ENCODE measurements at regions of chr12 and their contacts with region 1.

Region 1: DNA sequence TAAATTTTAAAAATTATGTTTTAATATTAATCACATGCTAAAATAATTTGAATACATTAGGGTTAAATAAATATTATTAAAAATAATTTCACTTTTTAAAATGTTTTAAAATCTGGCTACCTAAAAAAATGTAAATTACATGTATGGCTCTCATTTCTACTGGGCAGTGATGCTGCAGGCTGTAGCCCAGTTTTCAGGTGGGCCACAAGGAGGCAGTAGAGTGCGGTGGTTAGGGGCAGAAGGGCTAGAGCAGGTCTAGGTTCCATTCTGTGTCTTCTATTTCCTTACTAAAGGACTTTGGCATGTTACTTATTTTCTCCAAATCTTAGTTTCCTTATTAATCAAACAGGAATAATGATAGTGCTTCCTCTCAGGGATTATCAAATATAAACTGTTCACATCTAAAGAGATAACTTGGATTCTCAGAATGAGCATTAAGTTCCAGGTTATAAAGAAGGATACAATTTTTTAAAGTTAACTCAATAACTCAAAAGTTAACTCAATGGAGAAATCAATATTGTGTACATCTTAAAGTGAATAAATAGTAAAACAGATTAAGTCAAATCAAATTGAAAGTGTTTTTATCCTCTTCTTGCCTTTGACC is 54.9 kb upstream of the OVCH1 start:
- DNase-seq: peak; percentile 66
- H3K4me3 ChIP-seq: no peak overlapping the region
- H3K27ac ChIP-seq: no peak overlapping the region
- H3K4me1 ChIP-seq: peaks cover 4% of the 10 kb centered on the region
- H3K27me3 ChIP-seq: no peaks in the 10 kb centered on the region
- CTCF ChIP-seq: peak; percentile 82 to 85
- POLR2A ChIP-seq: no peak

Region 2: GRCh38 chr12:29414368-29414767 is 138.1 kb before region 1 on chr12:
- CTCF ChIA-PET with region 1: no interaction called
- POLR2A ChIA-PET with region 1: no interaction called
- dilution Hi-C with region 1: no loop called
- intact Hi-C with region 1: no loop called
- DNase-seq: no peak
- H3K4me3 ChIP-seq: no peak overlapping the region
- H3K27ac ChIP-seq: no peak overlapping the region
- H3K4me1 ChIP-seq: no peaks in the 10 kb centered on the region
- H3K27me3 ChIP-seq: peaks cover 0 to 2% of the 10 kb centered on the region in 2 experiments
- CTCF ChIP-seq: no peak
- POLR2A ChIP-seq: no peak

Region 3: GRCh38 chr12:29519585-29520182 is 32.7 kb before region 1 on chr12:
- CTCF ChIA-PET with region 1: interaction called, 20 read pairs
- POLR2A ChIA-PET with region 1: no interaction called
- dilution Hi-C with region 1: no loop called
- intact Hi-C with region 1: no loop called
- DNase-seq: peak; percentile 75
- H3K4me3 ChIP-seq: no peak overlapping the region
- H3K27ac ChIP-seq: no peak overlapping the region
- H3K4me1 ChIP-seq: no peaks in the 10 kb centered on the region
- H3K27me3 ChIP-seq: no peaks in the 10 kb centered on the region
- CTCF ChIP-seq: peak; percentile 21 to 33
- POLR2A ChIP-seq: no peak

Region 4: DNA sequence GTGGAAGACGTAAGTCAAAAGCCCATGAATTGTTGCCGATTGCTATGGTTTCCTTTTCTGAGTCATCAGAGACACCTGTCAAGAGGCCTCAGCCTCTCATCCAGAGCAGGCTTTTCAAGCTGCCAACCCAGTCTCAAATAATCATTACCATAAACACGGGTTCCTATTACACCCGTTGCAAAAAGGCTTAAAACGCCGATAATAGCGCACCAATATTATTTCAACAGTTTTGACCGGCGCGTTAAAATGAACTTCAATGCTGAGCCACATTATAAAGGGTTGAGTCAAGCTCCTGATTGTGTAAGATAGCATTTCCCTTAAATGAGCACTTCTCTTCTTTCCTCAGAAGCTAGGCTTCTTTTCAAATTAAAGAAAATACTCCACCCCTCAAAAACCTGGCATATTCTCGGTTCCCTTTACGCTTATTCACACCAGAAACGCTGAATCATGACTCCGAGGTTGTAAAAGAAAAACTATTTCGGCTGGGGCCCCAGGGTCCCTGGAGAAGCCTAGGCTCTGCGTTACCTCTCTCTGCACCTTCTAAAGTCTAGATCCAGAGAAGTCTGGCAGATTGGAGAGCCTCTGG is 230.0 kb after region 1 on chr12:
- CTCF ChIA-PET with region 1: interaction called, 6 read pairs
- POLR2A ChIA-PET with region 1: no interaction called
- dilution Hi-C with region 1: no loop called
- intact Hi-C with region 1: loop called (anchors 1 kb)
- DNase-seq: peak; percentile 63
- H3K4me3 ChIP-seq: peak overlapping the region; percentile 32 to 71 (median 60)
- H3K27ac ChIP-seq: no peak overlapping the region
- H3K4me1 ChIP-seq: peaks cover 16% of the 10 kb centered on the region
- H3K27me3 ChIP-seq: peaks cover 4 to 15% of the 10 kb centered on the region in 2 experiments
- CTCF ChIP-seq: no peak
- POLR2A ChIP-seq: no peak

Region 5: GRCh38 chr12:29889737-29890136 is 337.3 kb after region 1 on chr12:
- CTCF ChIA-PET with region 1: interaction called, 5 read pairs
- POLR2A ChIA-PET with region 1: no interaction called
- dilution Hi-C with region 1: no loop called
- intact Hi-C with region 1: loop called (anchors 5 kb)
- DNase-seq: peak; percentile 25
- H3K4me3 ChIP-seq: no peak overlapping the region
- H3K27ac ChIP-seq: no peak overlapping the region
- H3K4me1 ChIP-seq: no peaks in the 10 kb centered on the region
- H3K27me3 ChIP-seq: no peaks in the 10 kb centered on the region
- CTCF ChIP-seq: peak; percentile 33 to 39
- POLR2A ChIP-seq: no peak

Region 6: GRCh38 chr12:30002677-30003076 is 450.3 kb after region 1 on chr12:
- CTCF ChIA-PET with region 1: interaction called, 5 read pairs
- POLR2A ChIA-PET with region 1: no interaction called
- dilution Hi-C with region 1: no loop called
- intact Hi-C with region 1: loop called (anchors 1 kb)
- DNase-seq: no peak
- H3K4me3 ChIP-seq: no peak overlapping the region
- H3K27ac ChIP-seq: no peak overlapping the region
- H3K4me1 ChIP-seq: no peaks in the 10 kb centered on the region
- H3K27me3 ChIP-seq: no peaks in the 10 kb centered on the region
- CTCF ChIP-seq: no peak
- POLR2A ChIP-seq: no peak

Region 7: GRCh38 chr12:30286345-30286926 is 734.0 kb after region 1 on chr12:
- CTCF ChIA-PET with region 1: interaction called, 7 read pairs
- POLR2A ChIA-PET with region 1: no interaction called
- dilution Hi-C with region 1: no loop called
- intact Hi-C with region 1: loop called (anchors 1 kb)
- DNase-seq: peak; percentile 64
- H3K4me3 ChIP-seq: no peak overlapping the region
- H3K27ac ChIP-seq: no peak overlapping the region
- H3K4me1 ChIP-seq: no peaks in the 10 kb centered on the region
- H3K27me3 ChIP-seq: peaks cover 4 to 5% of the 10 kb centered on the region in 2 experiments
- CTCF ChIP-seq: peak; percentile 40 to 48
- POLR2A ChIP-seq: no peak

Region 8: GRCh38 chr12:30457621-30458289 is 905.3 kb after region 1 on chr12:
- CTCF ChIA-PET with region 1: interaction called, 7 read pairs
- POLR2A ChIA-PET with region 1: no interaction called
- dilution Hi-C with region 1: no loop called
- intact Hi-C with region 1: loop called (anchors 5 kb)
- DNase-seq: peak; percentile 75
- H3K4me3 ChIP-seq: no peak overlapping the region
- H3K27ac ChIP-seq: no peak overlapping the region
- H3K4me1 ChIP-seq: no peaks in the 10 kb centered on the region
- H3K27me3 ChIP-seq: no peaks in the 10 kb centered on the region
- CTCF ChIP-seq: peak; percentile 23 to 35
- POLR2A ChIP-seq: no peak

Region 9: DNA sequence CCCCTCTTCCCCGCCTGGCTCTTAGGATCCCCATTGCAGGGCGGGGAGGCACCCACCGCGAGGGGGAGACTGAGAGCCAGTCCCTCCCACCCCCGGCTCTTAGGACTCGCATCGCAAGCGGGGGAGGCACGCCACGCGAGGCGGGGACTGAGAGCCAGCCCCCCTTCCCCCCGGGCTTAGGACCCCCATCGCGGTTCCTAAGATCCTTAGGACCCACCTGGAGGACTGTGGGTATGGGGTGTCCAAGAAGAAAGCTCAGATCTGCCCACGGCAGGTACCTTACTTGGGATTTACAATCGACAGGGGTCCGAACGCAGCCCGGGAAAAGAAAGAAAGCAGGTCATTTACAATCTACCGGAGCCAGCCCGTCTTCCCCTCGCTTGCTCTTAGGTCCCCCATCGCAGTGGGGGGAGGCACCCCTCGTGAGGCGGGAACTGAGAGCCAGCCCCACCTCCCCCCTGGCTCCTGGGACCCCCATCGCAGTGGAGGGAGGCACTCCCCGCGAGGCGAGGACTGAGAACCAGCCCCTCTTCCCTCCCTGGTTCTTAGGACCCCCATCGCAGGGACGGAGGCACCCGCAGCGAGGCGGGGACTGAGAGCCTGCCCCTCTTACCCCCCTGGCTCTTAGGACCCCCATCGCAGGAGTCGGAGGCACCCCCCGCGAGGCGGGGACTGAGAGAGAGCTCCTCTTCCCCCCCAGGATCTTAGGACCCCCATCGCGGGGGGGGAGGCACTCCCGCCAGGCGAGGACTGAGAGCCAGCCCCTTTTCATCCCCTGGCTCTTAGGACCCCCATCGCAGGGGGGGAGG is 1565.0 kb after region 1 on chr12:
- CTCF ChIA-PET with region 1: no interaction called
- POLR2A ChIA-PET with region 1: no interaction called
- dilution Hi-C with region 1: no loop called
- intact Hi-C with region 1: no loop called
- DNase-seq: peak; percentile 49
- H3K4me3 ChIP-seq: peak overlapping the region; percentile 21 to 58 (median 46)
- H3K27ac ChIP-seq: no peak overlapping the region
- H3K4me1 ChIP-seq: peaks cover 4% of the 10 kb centered on the region
- H3K27me3 ChIP-seq: peaks cover 17 to 23% of the 10 kb centered on the region in 2 experiments
- CTCF ChIP-seq: peak; percentile 42 to 82
- POLR2A ChIP-seq: no peak

Measured in endothelial cell of umbilical vein (primary cell).